ENCODE measurements at regions of chr5 and their contacts with region 1.

Region 1: DNA sequence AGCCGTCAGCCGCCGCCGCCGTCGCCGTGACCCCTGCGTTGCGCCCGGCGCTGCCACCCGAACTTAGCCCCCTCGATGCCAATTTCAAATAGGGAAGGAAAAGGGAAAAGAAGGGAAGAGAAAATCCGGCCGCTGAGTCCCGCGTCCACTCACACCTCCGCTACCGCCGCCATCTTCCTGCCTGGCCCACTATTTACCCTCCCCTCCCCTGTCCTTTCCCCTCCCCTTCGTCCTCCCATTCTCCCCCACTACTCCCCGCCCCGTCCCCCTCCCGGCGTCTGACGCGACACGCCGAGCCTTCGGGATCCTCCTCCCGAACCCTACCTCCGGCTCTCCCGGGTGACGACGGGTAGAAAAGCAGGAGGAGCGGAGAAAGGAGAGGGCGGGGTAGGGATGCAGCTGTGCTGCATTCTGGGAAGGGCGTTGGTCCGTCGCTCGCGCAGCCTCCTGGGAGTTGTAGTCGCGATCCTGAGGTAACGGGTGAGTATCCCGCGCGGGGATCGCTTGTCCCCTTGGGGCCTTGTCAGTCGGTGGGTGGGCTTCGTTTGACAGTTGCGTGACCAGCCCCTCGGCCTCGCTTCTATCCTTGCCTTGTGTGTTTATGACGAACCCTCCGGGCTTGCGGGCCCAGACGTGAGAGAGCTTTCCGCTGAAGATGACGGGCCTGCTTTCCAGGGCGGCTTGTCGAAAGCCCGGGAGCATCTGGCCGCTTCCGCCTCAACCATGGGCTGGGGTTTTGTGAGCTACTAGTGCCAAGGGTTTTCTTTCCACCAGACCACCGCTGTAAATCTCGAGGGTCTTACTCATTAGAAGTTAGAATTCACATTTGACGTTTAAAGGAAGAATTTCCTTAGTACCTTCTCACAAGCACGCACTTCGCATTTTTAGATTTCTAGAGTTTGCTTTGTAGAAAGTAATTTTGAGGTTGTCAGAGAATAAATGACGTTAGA is at the starts of genes CERT1 and POLK:
- DNase-seq: peak; percentile 92
- ATAC-seq: peak; percentile 91
- H3K4me3 ChIP-seq: peak within 1 kb of the TSS; percentile 54 to 83 (median 80)
- H3K4me3 Mint-ChIP-seq: peak within 1 kb of the TSS; percentile 93
- H3K27ac ChIP-seq: peak within 1 kb of the TSS; percentile 74 to 79
- H3K27ac Mint-ChIP-seq: peak within 1 kb of the TSS; percentile 93
- H3K4me1 ChIP-seq: peaks cover 44 to 50% of the 10 kb centered on the region in 2 donors
- H3K4me1 Mint-ChIP-seq: peaks cover 67% of the 10 kb centered on the region
- H3K27me3 ChIP-seq: no peaks in the 10 kb centered on the region
- H3K27me3 Mint-ChIP-seq: no peaks in the 10 kb centered on the region
- CTCF ChIP-seq: no peak
- total RNA-seq, gene CERT1: 59.9 and 60.5 TPM in 2 replicates
- total RNA-seq, gene POLK: 41.6 and 42.9 TPM in 2 replicates

Region 2: DNA sequence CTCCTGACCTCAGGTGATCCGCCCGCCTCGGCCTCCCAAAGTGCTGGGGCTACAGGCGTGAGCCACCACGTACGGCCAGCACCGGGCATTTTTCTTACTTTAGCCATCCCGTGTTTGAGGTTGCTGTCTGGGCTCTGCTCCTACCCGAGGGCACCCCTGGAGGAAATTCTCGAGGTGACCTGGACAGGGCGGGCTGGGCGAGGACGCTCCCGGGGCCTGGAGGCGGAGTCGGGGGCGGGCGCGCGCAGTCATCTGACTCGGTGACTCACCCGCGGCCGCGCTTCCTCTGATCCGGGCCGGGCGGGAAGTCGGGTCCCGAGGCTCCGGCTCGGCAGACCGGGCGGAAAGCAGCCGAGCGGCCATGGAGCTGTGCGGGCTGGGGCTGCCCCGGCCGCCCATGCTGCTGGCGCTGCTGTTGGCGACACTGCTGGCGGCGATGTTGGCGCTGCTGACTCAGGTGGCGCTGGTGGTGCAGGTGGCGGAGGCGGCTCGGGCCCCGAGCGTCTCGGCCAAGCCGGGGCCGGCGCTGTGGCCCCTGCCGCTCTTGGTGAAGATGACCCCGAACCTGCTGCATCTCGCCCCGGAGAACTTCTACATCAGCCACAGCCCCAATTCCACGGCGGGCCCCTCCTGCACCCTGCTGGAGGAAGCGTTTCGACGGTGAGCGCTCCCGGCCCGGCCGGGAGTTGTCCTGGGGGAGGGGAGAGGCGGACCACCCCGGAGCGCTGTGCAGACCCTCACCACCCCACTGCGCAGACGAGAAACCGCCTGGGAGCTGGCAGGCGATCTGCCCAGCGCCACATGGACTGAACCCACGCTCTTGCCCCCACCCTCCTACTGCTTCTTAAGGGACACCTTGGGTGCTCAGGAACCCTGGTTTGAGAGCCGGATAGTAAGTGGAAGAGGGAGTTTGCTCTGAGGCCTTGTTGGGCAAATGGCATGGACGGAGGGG is 826.5 kb before region 1 on chr5 and contains the start of gene HEXB:
- CTCF ChIA-PET with region 1: no interaction called
- POLR2A ChIA-PET with region 1: no interaction called
- intact Hi-C with region 1: loop called (anchors 5 kb)
- DNase-seq: peak; percentile 80
- ATAC-seq: peak; percentile 85
- H3K4me3 ChIP-seq: peak within 1 kb of the TSS; percentile 80 to 98 (median 88)
- H3K4me3 Mint-ChIP-seq: peak within 1 kb of the TSS; percentile 87
- H3K27ac ChIP-seq: peak within 1 kb of the TSS; percentile 42 to 67
- H3K27ac Mint-ChIP-seq: peak within 1 kb of the TSS; percentile 75
- H3K4me1 ChIP-seq: peaks cover 12 to 16% of the 10 kb centered on the region in 2 donors
- H3K4me1 Mint-ChIP-seq: peaks cover 20% of the 10 kb centered on the region
- H3K27me3 ChIP-seq: no peaks in the 10 kb centered on the region
- H3K27me3 Mint-ChIP-seq: peaks cover 2% of the 10 kb centered on the region
- CTCF ChIP-seq: no peak
- total RNA-seq, gene HEXB: 47.1 and 55.3 TPM in 2 replicates

Region 3: DNA sequence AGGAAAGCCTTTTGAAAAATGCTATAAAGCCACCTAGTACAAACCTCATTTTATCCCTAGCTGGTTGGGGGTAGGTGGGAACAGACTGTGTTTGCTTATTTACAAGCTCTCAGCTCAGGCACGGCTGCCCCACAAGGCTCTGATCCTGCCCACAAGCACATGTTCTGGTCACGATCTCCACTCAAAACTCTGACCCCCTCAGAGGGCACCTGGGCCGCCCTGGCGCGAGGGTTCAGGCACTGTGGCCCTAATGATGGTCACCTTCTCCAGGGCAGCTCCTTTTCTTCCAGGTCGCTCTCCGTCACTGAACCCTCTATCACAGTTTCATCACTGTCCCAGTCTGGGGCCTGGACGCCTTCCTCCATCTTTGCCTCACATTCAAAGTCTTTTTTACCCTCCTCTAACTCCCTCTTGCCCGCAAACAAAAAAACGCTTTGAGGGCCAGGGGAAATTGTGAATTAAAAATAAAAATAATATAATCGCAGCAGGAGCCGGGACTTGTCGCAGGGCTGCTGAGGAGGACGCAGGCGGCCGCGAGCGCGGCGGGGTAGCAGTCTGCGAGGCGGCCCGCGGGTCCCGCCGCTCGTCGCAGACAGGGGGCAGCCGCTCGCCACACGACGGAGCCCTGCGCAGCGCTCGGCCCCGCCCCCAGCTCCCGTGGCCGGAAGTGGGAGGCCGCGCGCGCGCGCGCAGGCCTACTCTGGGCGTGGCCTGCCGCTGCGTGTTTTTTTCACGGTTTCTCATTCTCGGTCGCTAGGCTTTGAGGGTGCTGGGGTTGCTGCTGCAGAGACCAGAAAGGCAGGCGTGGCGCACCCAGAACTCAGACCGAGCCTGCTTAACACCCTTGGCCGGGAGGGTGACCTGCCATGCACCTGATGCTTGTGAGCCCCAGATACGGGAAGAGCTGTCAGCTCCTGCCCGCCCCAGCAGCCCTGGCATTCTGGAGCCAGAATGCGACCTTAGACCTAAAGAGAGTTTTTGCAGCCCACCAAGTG is 275.1 kb before region 1 on chr5 and contains the start of gene ANKRD31:
- CTCF ChIA-PET with region 1: no interaction called
- POLR2A ChIA-PET with region 1: no interaction called
- intact Hi-C with region 1: loop called (anchors 1 kb)
- DNase-seq: peak; percentile 93
- ATAC-seq: peak; percentile 99
- H3K4me3 ChIP-seq: peak within 1 kb of the TSS; percentile 57 to 84 (median 73)
- H3K4me3 Mint-ChIP-seq: peak within 1 kb of the TSS; percentile 99
- H3K27ac ChIP-seq: peak within 1 kb of the TSS; percentile 45 to 63
- H3K27ac Mint-ChIP-seq: peak within 1 kb of the TSS; percentile 92
- H3K4me1 ChIP-seq: peaks cover 4 to 8% of the 10 kb centered on the region in 2 donors
- H3K4me1 Mint-ChIP-seq: peaks cover 11% of the 10 kb centered on the region
- H3K27me3 ChIP-seq: no peaks in the 10 kb centered on the region
- H3K27me3 Mint-ChIP-seq: peaks cover 7% of the 10 kb centered on the region
- CTCF ChIP-seq: peak; percentile 87
- total RNA-seq, gene ANKRD31: 0.10 TPM in 2 replicates

Region 4: GRCh38 chr5:75524071-75524470 is 12.4 kb after region 1 on chr5:
- CTCF ChIA-PET with region 1: interaction called, 5 read pairs
- POLR2A ChIA-PET with region 1: interaction called, 7 read pairs
- intact Hi-C with region 1: loop called (anchors 1 kb)
- DNase-seq: peak; percentile 49
- ATAC-seq: peak; percentile 71
- H3K4me3 ChIP-seq: peak overlapping the region in 2 of 5 experiments; percentile 16 to 43
- H3K4me3 Mint-ChIP-seq: peak overlapping the region; percentile 73
- H3K27ac ChIP-seq: peak overlapping the region in 1 of 2 donors; percentile 79
- H3K27ac Mint-ChIP-seq: peak overlapping the region; percentile 84
- H3K4me1 ChIP-seq: peaks cover 27 to 39% of the 10 kb centered on the region in 2 donors
- H3K4me1 Mint-ChIP-seq: peaks cover 47% of the 10 kb centered on the region
- H3K27me3 ChIP-seq: no peaks in the 10 kb centered on the region
- H3K27me3 Mint-ChIP-seq: no peaks in the 10 kb centered on the region
- CTCF ChIP-seq: no peak

Region 5: GRCh38 chr5:75681125-75681830 is 169.6 kb after region 1 on chr5:
- CTCF ChIA-PET with region 1: interaction called, 3 read pairs
- POLR2A ChIA-PET with region 1: no interaction called
- intact Hi-C with region 1: loop called (anchors 2 kb)
- DNase-seq: peak; percentile 55
- ATAC-seq: peak; percentile 56
- H3K4me3 ChIP-seq: no peak overlapping the region
- H3K4me3 Mint-ChIP-seq: no peak overlapping the region
- H3K27ac ChIP-seq: no peak overlapping the region
- H3K27ac Mint-ChIP-seq: no peak overlapping the region
- H3K4me1 ChIP-seq: peaks cover 0 to 3% of the 10 kb centered on the region in 2 donors
- H3K4me1 Mint-ChIP-seq: peaks cover 7% of the 10 kb centered on the region
- H3K27me3 ChIP-seq: no peaks in the 10 kb centered on the region
- H3K27me3 Mint-ChIP-seq: no peaks in the 10 kb centered on the region
- CTCF ChIP-seq: peak; percentile 86

Region 6: DNA sequence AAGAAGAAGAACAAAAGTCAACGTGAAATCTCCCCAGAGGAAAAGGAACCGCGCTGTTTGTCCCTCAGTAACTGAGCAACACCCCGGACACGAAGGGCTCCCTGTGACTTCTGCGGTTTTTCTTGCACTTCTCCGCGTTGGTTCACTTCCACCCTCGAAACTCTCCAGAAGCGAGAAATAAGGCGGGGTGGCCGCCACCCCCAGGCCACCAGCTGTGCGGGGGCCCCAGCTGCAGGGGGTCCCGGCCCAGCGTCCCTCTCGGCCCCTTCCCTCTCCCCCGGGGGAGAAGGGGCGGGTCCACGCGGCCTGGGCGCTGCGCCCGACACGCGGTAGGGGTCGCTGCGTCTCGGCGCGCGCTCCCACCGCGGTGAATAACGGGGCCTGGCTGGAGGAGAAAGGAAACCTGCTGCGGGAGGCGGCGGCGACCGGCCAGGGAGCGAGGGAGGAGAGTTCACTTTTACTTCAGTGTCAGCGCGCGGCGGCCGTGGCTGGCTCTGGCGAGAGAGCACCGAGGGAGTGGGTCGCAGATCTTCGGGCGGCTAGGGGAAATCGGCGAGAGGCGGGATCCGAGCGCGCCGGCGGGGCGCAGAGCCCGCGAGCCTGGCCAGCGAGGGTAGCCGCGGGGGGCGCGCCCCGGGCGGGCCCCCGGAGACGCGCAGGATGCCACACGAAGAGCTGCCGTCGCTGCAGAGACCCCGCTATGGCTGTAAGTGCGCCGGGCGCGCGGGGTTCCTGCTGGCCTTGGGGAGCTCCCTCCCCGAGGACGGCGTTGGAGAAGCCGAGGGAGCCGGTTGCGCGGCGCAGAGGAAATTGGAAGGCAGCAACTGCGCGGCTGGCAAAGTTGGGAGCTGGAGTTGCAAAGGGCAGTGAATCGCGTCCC is 891.4 kb after region 1 on chr5 and contains the start of gene IQGAP2:
- CTCF ChIA-PET with region 1: no interaction called
- POLR2A ChIA-PET with region 1: no interaction called
- intact Hi-C with region 1: loop called (anchors 10 kb)
- DNase-seq: peak; percentile 94
- ATAC-seq: peak; percentile 75
- H3K4me3 ChIP-seq: peak within 1 kb of the TSS; percentile 61 to 78 (median 70)
- H3K4me3 Mint-ChIP-seq: peak within 1 kb of the TSS; percentile 97
- H3K27ac ChIP-seq: peak within 1 kb of the TSS; percentile 95 to 96
- H3K27ac Mint-ChIP-seq: peak within 1 kb of the TSS; percentile 95
- H3K4me1 ChIP-seq: peaks cover 23 to 45% of the 10 kb centered on the region in 2 donors
- H3K4me1 Mint-ChIP-seq: peaks cover 49% of the 10 kb centered on the region
- H3K27me3 ChIP-seq: peaks cover 0 to 4% (median 0%) of the 10 kb centered on the region in 4 experiments
- H3K27me3 Mint-ChIP-seq: peaks cover 5% of the 10 kb centered on the region
- CTCF ChIP-seq: peak; percentile 79
- total RNA-seq, gene IQGAP2: 12.3 and 15.0 TPM in 2 replicates

Region 7: GRCh38 chr5:76782444-76782843 is 1270.7 kb after region 1 on chr5:
- CTCF ChIA-PET with region 1: no interaction called
- POLR2A ChIA-PET with region 1: no interaction called
- intact Hi-C with region 1: no loop called
- DNase-seq: no peak
- ATAC-seq: no peak
- H3K4me3 ChIP-seq: no peak overlapping the region
- H3K4me3 Mint-ChIP-seq: no peak overlapping the region
- H3K27ac ChIP-seq: no peak overlapping the region
- H3K27ac Mint-ChIP-seq: no peak overlapping the region
- H3K4me1 ChIP-seq: peaks cover 0 to 3% of the 10 kb centered on the region in 2 donors
- H3K4me1 Mint-ChIP-seq: peaks cover 3% of the 10 kb centered on the region
- H3K27me3 ChIP-seq: no peaks in the 10 kb centered on the region
- H3K27me3 Mint-ChIP-seq: peaks cover 8% of the 10 kb centered on the region
- CTCF ChIP-seq: no peak